Activated CD4-positive, alpha-beta T cell treated with anti-CD3 and anti-CD28 coated beads, Interleukin-2, amount 10 ng/mL, durations not matched to agents 24 days and 14 days (primary cell): ENCODE measurements at regions of chr16 and their contacts with region 1.

Region 1: GRCh38 chr16:77584205-77584859 is 138.0 kb upstream of the NUDT7 start:
- DNase-seq: peak; percentile 80
- H3K4me3 Mint-ChIP-seq: no peak overlapping the region
- H3K27ac Mint-ChIP-seq: no peak overlapping the region
- H3K4me1 Mint-ChIP-seq: peaks cover 7% of the 10 kb centered on the region
- H3K27me3 Mint-ChIP-seq: peaks cover 9% of the 10 kb centered on the region

Region 2: GRCh38 chr16:77359065-77359502 is 225.2 kb before region 1 on chr16:
- intact Hi-C with region 1: no loop called
- DNase-seq: no peak
- H3K4me3 Mint-ChIP-seq: no peak overlapping the region
- H3K27ac Mint-ChIP-seq: no peak overlapping the region
- H3K4me1 Mint-ChIP-seq: no peaks in the 10 kb centered on the region
- H3K27me3 Mint-ChIP-seq: peaks cover 1% of the 10 kb centered on the region

Region 3: GRCh38 chr16:77376358-77376757 is 208.0 kb before region 1 on chr16:
- intact Hi-C with region 1: loop called (anchors 2 kb)
- DNase-seq: peak; percentile 64
- H3K4me3 Mint-ChIP-seq: no peak overlapping the region
- H3K27ac Mint-ChIP-seq: no peak overlapping the region
- H3K4me1 Mint-ChIP-seq: no peaks in the 10 kb centered on the region
- H3K27me3 Mint-ChIP-seq: peaks cover 4% of the 10 kb centered on the region

Region 4: DNA sequence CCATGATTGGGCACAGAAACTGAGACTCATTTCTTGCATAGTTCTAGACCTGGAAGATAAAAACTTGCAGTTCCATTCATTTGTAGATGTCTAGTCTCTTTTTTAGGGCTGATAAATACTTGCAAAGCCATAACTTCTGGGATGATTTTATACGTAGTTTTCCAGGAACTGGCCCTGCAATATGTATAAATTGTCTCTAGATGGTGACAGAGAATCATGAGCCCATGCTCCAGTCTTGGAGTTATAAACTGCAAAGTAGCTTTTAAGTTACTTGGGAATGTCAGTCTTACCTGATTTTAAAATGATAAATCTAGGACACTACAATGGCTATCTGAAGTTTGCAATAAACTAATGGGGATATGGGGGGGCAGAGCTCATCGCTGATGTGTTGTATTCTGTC is 146.5 kb before region 1 on chr16:
- intact Hi-C with region 1: loop called (anchors 10 kb)
- DNase-seq: no peak
- H3K4me3 Mint-ChIP-seq: no peak overlapping the region
- H3K27ac Mint-ChIP-seq: no peak overlapping the region
- H3K4me1 Mint-ChIP-seq: no peaks in the 10 kb centered on the region
- H3K27me3 Mint-ChIP-seq: peaks cover 36% of the 10 kb centered on the region